T-cell (primary cell): ENCODE measurements at regions of chr15 and their contacts with region 1.

Region 1: GRCh38 chr15:96672629-96673028 is 342.1 kb downstream of the NR2F2 start:
- DNase-seq: no peak
- ATAC-seq: no peak
- H3K4me3 ChIP-seq: no peak overlapping the region
- H3K4me3 Mint-ChIP-seq: no peak overlapping the region
- H3K27ac ChIP-seq: no peak overlapping the region
- H3K27ac Mint-ChIP-seq: no peak overlapping the region
- H3K4me1 ChIP-seq: no peaks in the 10 kb centered on the region
- H3K4me1 Mint-ChIP-seq: no peaks in the 10 kb centered on the region
- H3K27me3 ChIP-seq: no peaks in the 10 kb centered on the region
- H3K27me3 Mint-ChIP-seq: no peaks in the 10 kb centered on the region

Region 2: GRCh38 chr15:96606617-96607016 is 66.0 kb before region 1 on chr15:
- CTCF ChIA-PET with region 1: no interaction called
- POLR2A ChIA-PET with region 1: no interaction called
- DNase-seq: no peak
- ATAC-seq: no peak
- H3K4me3 ChIP-seq: no peak overlapping the region
- H3K4me3 Mint-ChIP-seq: no peak overlapping the region
- H3K27ac ChIP-seq: no peak overlapping the region
- H3K27ac Mint-ChIP-seq: no peak overlapping the region
- H3K4me1 ChIP-seq: no peaks in the 10 kb centered on the region
- H3K4me1 Mint-ChIP-seq: no peaks in the 10 kb centered on the region
- H3K27me3 ChIP-seq: no peaks in the 10 kb centered on the region
- H3K27me3 Mint-ChIP-seq: no peaks in the 10 kb centered on the region

Region 3: DNA sequence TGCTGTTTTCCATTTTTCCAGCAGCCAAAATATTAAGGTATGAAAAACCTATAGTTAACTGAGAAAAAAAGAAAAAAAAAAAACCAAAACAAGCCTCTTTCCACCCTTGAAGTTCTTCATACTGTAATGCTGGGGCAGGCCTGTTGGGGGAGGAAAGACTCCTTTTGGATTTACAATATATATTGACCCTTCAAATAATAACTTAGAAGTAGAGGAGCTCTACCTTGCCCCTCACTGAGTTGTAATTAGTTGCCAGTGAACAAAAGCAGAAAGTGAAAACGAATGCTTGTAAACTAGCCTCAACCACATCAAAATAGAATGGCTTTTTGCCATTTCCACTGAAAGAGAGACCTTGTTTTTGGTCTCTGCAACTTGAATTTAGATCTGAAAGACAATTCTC is 15.5 kb before region 1 on chr15:
- CTCF ChIA-PET with region 1: interaction called in 1 of 2 experiments, 10 read pairs
- POLR2A ChIA-PET with region 1: no interaction called
- DNase-seq: no peak
- ATAC-seq: no peak
- H3K4me3 ChIP-seq: no peak overlapping the region
- H3K4me3 Mint-ChIP-seq: no peak overlapping the region
- H3K27ac ChIP-seq: no peak overlapping the region
- H3K27ac Mint-ChIP-seq: no peak overlapping the region
- H3K4me1 ChIP-seq: no peaks in the 10 kb centered on the region
- H3K4me1 Mint-ChIP-seq: no peaks in the 10 kb centered on the region
- H3K27me3 ChIP-seq: no peaks in the 10 kb centered on the region
- H3K27me3 Mint-ChIP-seq: no peaks in the 10 kb centered on the region